A549 (cell line): ENCODE measurements at regions of chr7 and their contacts with region 1.

Region 1: GRCh38 chr7:138002096-138002827 is 376 bp upstream of the CREB3L2 start:
- DNase-seq: peak; percentile 92 to 100
- ATAC-seq: peak; percentile 95 to 97
- H3K4me3 ChIP-seq: peak overlapping the region; percentile 73
- H3K27ac ChIP-seq: peak overlapping the region; percentile 74 to 86
- H3K4me1 ChIP-seq: peaks cover 30% of the 10 kb centered on the region
- CTCF ChIP-seq: peak; percentile 94
- EP300 ChIP-seq: no peak
- POLR2A ChIP-seq: no peak
- RAD21 ChIP-seq: peak; percentile 50 to 52; a peak in 4 of 5 replicates

Region 2: DNA sequence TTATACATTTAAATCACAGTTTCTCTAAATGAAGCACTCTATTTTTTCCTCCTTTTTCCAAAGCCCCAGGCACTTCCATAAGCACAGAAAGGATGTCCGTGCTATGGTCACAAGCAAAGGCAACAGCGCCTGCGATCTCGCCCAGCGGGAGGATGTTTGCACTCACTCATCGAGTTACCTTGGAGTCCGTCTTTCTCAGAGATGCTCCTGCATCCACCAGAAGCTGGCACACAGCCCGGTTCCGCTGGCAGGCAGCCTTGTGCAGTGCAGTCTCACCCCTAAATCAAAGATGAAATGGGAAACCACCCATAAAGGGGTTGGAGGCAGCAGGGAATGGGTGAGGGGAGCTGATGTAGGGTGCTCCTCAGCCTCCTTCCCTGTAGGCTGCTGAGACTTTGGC is 606.8 kb before region 1 on chr7:
- CTCF ChIA-PET with region 1: no interaction called
- POLR2A ChIA-PET with region 1: no interaction called
- DNase-seq: no peak
- ATAC-seq: no peak
- H3K4me3 ChIP-seq: no peak overlapping the region
- H3K27ac ChIP-seq: no peak overlapping the region
- H3K4me1 ChIP-seq: no peaks in the 10 kb centered on the region
- CTCF ChIP-seq: no peak
- EP300 ChIP-seq: no peak
- POLR2A ChIP-seq: no peak
- RAD21 ChIP-seq: no peak

Region 3: GRCh38 chr7:137923380-137923779 is 78.9 kb before region 1 on chr7:
- CTCF ChIA-PET with region 1: interaction called, 13 read pairs
- POLR2A ChIA-PET with region 1: no interaction called
- DNase-seq: peak; percentile 15 to 55
- ATAC-seq: peak; percentile 93 to 95
- H3K4me3 ChIP-seq: no peak overlapping the region
- H3K27ac ChIP-seq: peak overlapping the region in 1 of 2 experiments; percentile 70; a peak in 4 of 6 replicates
- H3K4me1 ChIP-seq: peaks cover 22% of the 10 kb centered on the region
- CTCF ChIP-seq: no peak
- EP300 ChIP-seq: no peak
- POLR2A ChIP-seq: no peak
- RAD21 ChIP-seq: no peak

Region 4: DNA sequence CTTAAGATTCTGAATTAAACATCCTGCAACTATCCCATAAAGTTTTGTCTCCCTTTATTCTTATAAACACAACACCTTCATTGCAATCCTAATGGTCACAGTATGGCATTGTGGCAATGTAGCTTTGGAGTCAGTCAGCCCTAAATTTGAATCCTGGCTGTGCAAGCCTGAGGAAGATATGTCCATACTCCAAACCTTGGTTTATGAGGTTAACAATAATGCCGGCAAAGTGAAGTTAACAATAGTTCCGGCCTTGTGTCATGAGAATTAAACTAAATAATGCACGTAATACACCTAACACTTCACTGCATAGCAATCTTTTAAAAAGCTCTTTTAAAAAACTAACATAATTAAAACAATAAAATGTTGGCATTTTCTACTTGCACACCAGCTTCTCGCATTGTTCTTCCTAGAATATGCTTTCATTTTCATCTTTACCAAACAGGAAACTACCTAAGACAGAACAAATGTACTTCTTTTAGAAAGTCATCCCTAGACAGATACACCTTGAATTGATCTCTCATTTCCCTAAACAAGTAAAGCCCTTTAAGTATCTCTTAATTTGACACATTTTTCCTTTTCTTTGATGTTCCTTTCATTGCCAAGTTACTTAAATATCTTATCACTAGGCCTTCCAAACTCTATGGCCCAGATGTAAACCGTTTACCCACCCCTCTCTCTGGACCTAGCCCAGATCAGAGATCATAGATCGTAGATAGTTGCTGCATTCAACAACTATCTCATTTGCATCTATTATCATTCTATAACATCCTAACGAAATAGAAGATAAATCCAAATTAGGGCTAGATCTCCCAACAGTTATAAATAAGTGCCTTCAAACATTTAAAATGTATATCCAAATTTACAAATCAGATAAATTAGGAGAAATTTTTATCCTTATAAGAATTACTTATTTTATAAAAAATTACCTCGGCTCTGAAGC is 67.0 kb before region 1 on chr7:
- CTCF ChIA-PET with region 1: interaction called, 13 read pairs
- POLR2A ChIA-PET with region 1: interaction called, 4 read pairs
- DNase-seq: no peak
- ATAC-seq: no peak
- H3K4me3 ChIP-seq: no peak overlapping the region
- H3K27ac ChIP-seq: no peak overlapping the region
- H3K4me1 ChIP-seq: peaks cover 42% of the 10 kb centered on the region
- CTCF ChIP-seq: no peak
- EP300 ChIP-seq: no peak
- POLR2A ChIP-seq: no peak
- RAD21 ChIP-seq: no peak

Region 5: GRCh38 chr7:137953665-137954470 is 48.4 kb before region 1 on chr7:
- CTCF ChIA-PET with region 1: interaction called, 11 read pairs
- POLR2A ChIA-PET with region 1: interaction called, 8 read pairs
- DNase-seq: peak; percentile 89 to 90
- ATAC-seq: peak; percentile 95
- H3K4me3 ChIP-seq: peak overlapping the region; percentile 7; the same call in 1 of the 3 replicates
- H3K27ac ChIP-seq: peak overlapping the region; percentile 82
- H3K4me1 ChIP-seq: peaks cover 84% of the 10 kb centered on the region
- CTCF ChIP-seq: no peak
- EP300 ChIP-seq: peak; percentile 55 to 74; a peak in 3 of 5 replicates
- POLR2A ChIP-seq: no peak
- RAD21 ChIP-seq: peak in 1 of 2 experiments; percentile 21; a peak in 1 of 5 replicates

Region 6: DNA sequence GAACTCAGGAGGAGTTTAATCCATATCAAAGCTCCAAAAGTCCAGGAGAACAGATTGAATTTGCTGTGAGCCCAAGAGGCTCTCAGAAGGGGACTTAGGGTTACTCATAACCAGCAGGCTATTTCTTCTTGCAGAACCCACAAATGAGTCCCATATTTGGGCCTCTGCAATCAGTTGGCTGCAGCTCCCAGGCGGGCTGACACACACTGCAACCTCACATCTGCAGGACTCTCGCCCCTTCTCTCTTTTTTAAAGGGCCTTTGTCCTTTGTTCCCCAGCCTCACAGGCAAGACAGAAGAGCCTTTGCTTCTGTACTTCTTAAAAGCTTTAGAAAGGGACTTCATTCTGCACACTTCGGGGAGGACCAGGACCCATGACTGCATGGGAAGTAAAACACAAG is 27.0 kb before region 1 on chr7:
- CTCF ChIA-PET with region 1: interaction called, 11 read pairs
- POLR2A ChIA-PET with region 1: interaction called, 4 read pairs
- DNase-seq: no peak
- ATAC-seq: no peak
- H3K4me3 ChIP-seq: no peak overlapping the region
- H3K27ac ChIP-seq: peak overlapping the region in 1 of 2 experiments; percentile 24; a peak in 1 of 6 replicates
- H3K4me1 ChIP-seq: peaks cover 54% of the 10 kb centered on the region
- CTCF ChIP-seq: no peak
- EP300 ChIP-seq: no peak
- POLR2A ChIP-seq: no peak
- RAD21 ChIP-seq: no peak

Region 7: GRCh38 chr7:137985253-137985896 is 16.9 kb before region 1 on chr7:
- CTCF ChIA-PET with region 1: interaction called, 19 read pairs
- POLR2A ChIA-PET with region 1: no interaction called
- DNase-seq: no peak
- ATAC-seq: no peak
- H3K4me3 ChIP-seq: no peak overlapping the region
- H3K27ac ChIP-seq: no peak overlapping the region
- H3K4me1 ChIP-seq: peaks cover 18% of the 10 kb centered on the region
- CTCF ChIP-seq: no peak
- EP300 ChIP-seq: no peak
- POLR2A ChIP-seq: no peak
- RAD21 ChIP-seq: no peak

Region 8: DNA sequence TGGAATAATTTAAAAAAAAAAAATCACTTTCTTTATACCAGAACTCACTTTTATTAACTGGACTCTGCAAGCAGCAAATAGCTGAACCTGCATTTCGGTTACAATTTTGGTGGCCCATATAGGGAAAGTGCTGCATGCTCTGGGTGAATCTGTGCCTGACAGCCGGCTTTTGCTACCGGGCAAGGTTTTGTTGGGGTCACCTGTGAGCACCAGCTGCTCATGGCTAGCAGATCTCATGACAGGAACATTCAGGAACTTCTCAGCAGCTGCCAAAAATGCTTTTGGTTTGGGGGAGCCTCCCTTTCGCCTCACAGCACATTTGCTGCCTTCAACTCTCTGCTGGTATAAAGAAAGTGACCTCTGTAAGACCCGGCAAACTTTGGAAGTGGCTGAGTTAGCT is 12.8 kb after region 1 on chr7:
- CTCF ChIA-PET with region 1: interaction called, 34 read pairs
- POLR2A ChIA-PET with region 1: interaction called, 3 read pairs
- DNase-seq: no peak
- ATAC-seq: no peak
- H3K4me3 ChIP-seq: no peak overlapping the region
- H3K27ac ChIP-seq: no peak overlapping the region
- H3K4me1 ChIP-seq: no peaks in the 10 kb centered on the region
- CTCF ChIP-seq: no peak
- EP300 ChIP-seq: no peak
- POLR2A ChIP-seq: no peak
- RAD21 ChIP-seq: no peak

Region 9: DNA sequence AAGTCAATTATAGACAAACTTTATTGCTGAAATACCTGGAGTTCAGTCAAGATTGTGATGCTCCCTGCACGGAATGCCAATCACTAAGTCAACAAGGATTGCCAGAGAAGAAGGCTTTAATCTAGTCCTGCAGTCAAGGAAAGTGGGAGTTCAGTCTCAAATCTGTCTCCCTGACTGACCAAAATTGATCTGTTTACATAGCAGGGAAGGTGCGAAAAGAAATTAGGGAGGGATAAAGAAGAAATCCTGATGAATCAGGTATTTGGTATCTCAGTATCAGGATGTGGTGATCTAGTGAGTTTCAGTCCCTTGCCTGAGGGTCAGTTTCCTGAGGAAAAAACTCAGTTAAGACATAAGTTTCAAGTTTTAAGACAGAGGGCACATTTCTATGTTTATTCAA is 71.9 kb after region 1 on chr7:
- CTCF ChIA-PET with region 1: no interaction called
- POLR2A ChIA-PET with region 1: no interaction called
- DNase-seq: no peak
- ATAC-seq: no peak
- H3K4me3 ChIP-seq: no peak overlapping the region
- H3K27ac ChIP-seq: no peak overlapping the region
- H3K4me1 ChIP-seq: no peaks in the 10 kb centered on the region
- CTCF ChIP-seq: no peak
- EP300 ChIP-seq: no peak
- POLR2A ChIP-seq: no peak
- RAD21 ChIP-seq: no peak

Region 10: GRCh38 chr7:138204285-138204981 is 202.2 kb after region 1 on chr7:
- CTCF ChIA-PET with region 1: no interaction called
- POLR2A ChIA-PET with region 1: no interaction called
- DNase-seq: no peak
- ATAC-seq: no peak
- H3K4me3 ChIP-seq: no peak overlapping the region
- H3K27ac ChIP-seq: no peak overlapping the region
- H3K4me1 ChIP-seq: no peaks in the 10 kb centered on the region
- CTCF ChIP-seq: no peak
- EP300 ChIP-seq: no peak
- POLR2A ChIP-seq: no peak
- RAD21 ChIP-seq: no peak